Naive thymus-derived CD8-positive, alpha-beta T cell (primary cell): ENCODE measurements at regions of chr7 and their contacts with region 1.

Region 1: DNA sequence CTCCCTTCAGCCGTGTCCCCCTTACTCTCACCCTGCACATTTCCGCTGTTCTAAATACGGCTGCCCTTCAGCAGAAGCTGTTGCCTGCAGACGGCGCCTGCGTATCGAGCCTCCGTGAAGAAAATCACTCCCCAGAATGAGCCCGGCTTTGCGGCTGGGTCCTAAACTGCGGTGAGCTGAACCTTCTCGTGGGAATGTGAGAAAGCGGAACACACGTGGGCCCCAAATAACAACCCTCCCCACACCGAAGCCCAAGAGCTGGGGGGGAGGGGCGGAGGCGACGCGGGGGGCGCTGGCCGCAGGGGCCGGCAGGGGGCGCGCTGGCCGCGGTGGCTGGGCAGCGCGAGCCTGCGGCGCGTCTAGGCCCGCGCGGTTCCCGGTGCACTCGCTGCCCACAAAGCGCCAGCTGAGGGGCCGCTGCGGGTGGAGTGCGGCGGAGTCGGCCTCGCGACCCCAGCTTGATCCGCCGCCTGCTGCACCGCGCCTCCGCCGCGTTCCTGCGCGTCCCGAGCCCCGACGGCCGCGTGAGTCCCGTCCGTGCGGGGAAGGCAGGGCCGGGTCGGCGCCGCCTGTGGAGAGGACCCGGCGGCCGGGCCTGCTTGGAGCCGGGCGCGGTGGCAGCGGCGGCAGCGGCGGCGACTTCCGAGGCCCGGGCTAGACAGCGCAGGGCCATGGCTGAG is at the start of gene ZNF398:
- DNase-seq: peak; percentile 70 to 88 (median 83)
- ATAC-seq: peak; percentile 77 to 80
- H3K4me3 Mint-ChIP-seq: peak within 1 kb of the TSS; percentile 89 to 94 (median 92)
- H3K27ac Mint-ChIP-seq: peak within 1 kb of the TSS; percentile 90 to 98 (median 95)
- H3K4me1 Mint-ChIP-seq: peaks cover 15 to 42% (median 35%) of the 10 kb centered on the region in 4 donors
- H3K27me3 Mint-ChIP-seq: no peaks in the 10 kb centered on the region
- polyA plus RNA-seq, gene ZNF398: 6.9 to 9.7 (median 7.6) TPM

Region 2: GRCh38 chr7:148877517-148877916 is 269.7 kb before region 1 on chr7:
- POLR2A ChIA-PET with region 1: no interaction called
- DNase-seq: no peak
- ATAC-seq: no peak
- H3K4me3 Mint-ChIP-seq: no peak overlapping the region
- H3K27ac Mint-ChIP-seq: peak overlapping the region in 1 of 10 donors; percentile 31
- H3K4me1 Mint-ChIP-seq: peaks cover 2 to 22% (median 4%) of the 10 kb centered on the region in 4 donors
- H3K27me3 Mint-ChIP-seq: no peaks in the 10 kb centered on the region

Region 3: GRCh38 chr7:148987010-148987750 is 160.0 kb before region 1 on chr7:
- POLR2A ChIA-PET with region 1: interaction called, 12 read pairs
- DNase-seq: peak; percentile 53 to 98 (median 82)
- ATAC-seq: peak; percentile 74 to 80
- H3K4me3 Mint-ChIP-seq: peak overlapping the region; percentile 95 to 98 (median 96)
- H3K27ac Mint-ChIP-seq: peak overlapping the region; percentile 90 to 98 (median 96)
- H3K4me1 Mint-ChIP-seq: peaks cover 30 to 57% (median 53%) of the 10 kb centered on the region in 4 donors
- H3K27me3 Mint-ChIP-seq: peaks cover 0 to 5% (median 0%) of the 10 kb centered on the region in 5 donors

Region 4: DNA sequence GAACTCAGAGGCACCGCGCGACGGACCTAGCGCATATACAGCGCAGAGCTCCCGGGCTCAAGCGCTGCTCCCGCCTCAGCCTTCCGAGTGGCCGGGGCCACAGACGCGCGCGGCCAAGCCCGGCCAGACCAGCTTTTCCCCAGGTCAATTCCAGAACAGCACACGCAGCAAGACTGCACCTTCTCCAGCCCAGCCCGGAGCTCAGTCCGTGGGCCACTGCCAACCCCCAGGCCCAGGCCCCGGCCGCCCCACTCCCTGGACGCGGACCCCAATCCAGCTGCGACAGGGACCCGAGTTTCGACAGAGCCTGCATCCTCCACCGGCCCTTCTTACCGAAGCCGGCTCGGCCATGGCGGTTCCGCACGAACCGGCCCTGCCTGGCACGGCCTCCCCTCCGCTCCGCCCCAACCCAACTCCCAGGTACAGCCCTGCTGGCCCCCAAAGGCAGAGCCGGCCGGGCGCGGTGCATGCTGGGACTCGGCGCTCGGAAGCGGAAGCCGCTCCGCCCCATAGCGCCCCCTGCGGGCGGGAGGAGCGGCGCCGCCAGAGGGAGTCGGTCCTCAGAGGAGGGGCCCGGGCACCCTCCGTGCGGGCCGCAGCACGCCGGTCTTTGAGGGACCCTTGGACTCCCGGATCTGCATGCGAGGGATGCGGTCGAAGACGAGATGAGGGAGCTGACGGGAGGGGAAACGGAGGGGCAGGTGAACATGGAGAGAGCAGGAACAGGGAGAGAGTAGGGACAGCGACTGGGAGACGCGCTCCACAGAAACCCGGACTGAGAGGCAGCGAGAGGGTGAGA is 21.1 kb before region 1 on chr7 and contains the start of gene ZNF425:
- POLR2A ChIA-PET with region 1: interaction called, 98 read pairs
- DNase-seq: peak; percentile 87 to 99 (median 93)
- ATAC-seq: peak; percentile 85 to 86
- H3K4me3 Mint-ChIP-seq: peak within 1 kb of the TSS; percentile 89 to 100 (median 99)
- H3K27ac Mint-ChIP-seq: peak within 1 kb of the TSS; percentile 92 to 100 (median 98)
- H3K4me1 Mint-ChIP-seq: peaks cover 21 to 38% (median 25%) of the 10 kb centered on the region in 4 donors
- H3K27me3 Mint-ChIP-seq: no peaks in the 10 kb centered on the region
- polyA plus RNA-seq, gene ZNF425: 0.65 to 1.8 (median 1.0) TPM